WTC11 (cell line): ENCODE measurements at regions of chr5 and their contacts with region 1.

Region 1: GRCh38 chr5:140926443-140927227 is 536 bp downstream of the PCDHAC1 start:
- DNase-seq: peak; percentile 98
- ATAC-seq: peak; percentile 86
- H3K4me3 Mint-ChIP-seq: peak overlapping the region; percentile 91
- H3K27ac Mint-ChIP-seq: no peak overlapping the region
- H3K4me1 Mint-ChIP-seq: peaks cover 28% of the 10 kb centered on the region
- H3K27me3 Mint-ChIP-seq: peaks cover 37% of the 10 kb centered on the region
- CTCF ChIP-seq: peak; percentile 87; the same call in 1 of the 2 replicates

Region 2: GRCh38 chr5:140855772-140856674 is 70.6 kb before region 1 on chr5 and contains the start of gene PCDHA10:
- CTCF ChIA-PET with region 1: interaction called, 34 read pairs
- POLR2A ChIA-PET with region 1: no interaction called
- DNase-seq: peak; percentile 48
- ATAC-seq: peak; percentile 84
- H3K4me3 Mint-ChIP-seq: peak within 1 kb of the TSS; percentile 92
- H3K27ac Mint-ChIP-seq: peak within 1 kb of the TSS; percentile 78
- H3K4me1 Mint-ChIP-seq: peaks cover 23% of the 10 kb centered on the region
- H3K27me3 Mint-ChIP-seq: no peaks in the 10 kb centered on the region
- CTCF ChIP-seq: peak; percentile 36
- total RNA-seq, gene PCDHA10: 10.8 to 12.0 TPM (median 11.6 TPM) in 3 replicates

Region 3: DNA sequence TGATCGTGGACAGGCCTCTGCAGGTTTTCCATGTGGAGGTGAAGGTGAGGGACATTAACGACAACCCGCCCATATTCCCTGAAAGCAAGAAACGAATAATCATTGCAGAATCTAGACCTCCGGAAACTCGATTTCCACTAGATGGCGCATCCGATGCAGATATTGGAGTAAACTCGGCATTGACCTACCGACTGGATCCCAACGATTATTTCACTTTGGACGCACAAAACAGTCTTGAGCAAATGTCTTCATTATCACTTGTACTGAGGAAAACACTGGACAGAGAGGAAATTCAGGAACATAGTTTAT is 44.1 kb before region 1 on chr5:
- CTCF ChIA-PET with region 1: interaction called, 19 read pairs
- POLR2A ChIA-PET with region 1: no interaction called
- DNase-seq: peak; percentile 69
- ATAC-seq: peak; percentile 70
- H3K4me3 Mint-ChIP-seq: peak overlapping the region; percentile 83
- H3K27ac Mint-ChIP-seq: peak overlapping the region; percentile 58; the same call in 1 of the 2 replicates
- H3K4me1 Mint-ChIP-seq: peaks cover 16% of the 10 kb centered on the region; the same call in 1 of the 2 replicates
- H3K27me3 Mint-ChIP-seq: no peaks in the 10 kb centered on the region
- CTCF ChIP-seq: peak; percentile 21; the same call in 1 of the 2 replicates

Region 4: GRCh38 chr5:140966293-140967225 is 39.9 kb after region 1 on chr5 and contains the start of gene PCDHAC2:
- CTCF ChIA-PET with region 1: interaction called, 79 read pairs
- POLR2A ChIA-PET with region 1: interaction called, 20 read pairs
- DNase-seq: peak; percentile 78
- ATAC-seq: peak; percentile 77
- H3K4me3 Mint-ChIP-seq: peak within 1 kb of the TSS; percentile 92
- H3K27ac Mint-ChIP-seq: peak within 1 kb of the TSS; percentile 51; the same call in 1 of the 2 replicates
- H3K4me1 Mint-ChIP-seq: peaks cover 50% of the 10 kb centered on the region
- H3K27me3 Mint-ChIP-seq: peaks cover 21% of the 10 kb centered on the region
- CTCF ChIP-seq: no peak
- total RNA-seq, gene PCDHAC2: 6.7 to 11.3 TPM (median 7.9 TPM) in 3 replicates

Region 5: GRCh38 chr5:141017943-141018342 is 91.3 kb after region 1 on chr5:
- CTCF ChIA-PET with region 1: interaction called, 14 read pairs
- POLR2A ChIA-PET with region 1: no interaction called
- DNase-seq: no peak
- ATAC-seq: no peak
- H3K4me3 Mint-ChIP-seq: no peak overlapping the region
- H3K27ac Mint-ChIP-seq: no peak overlapping the region
- H3K4me1 Mint-ChIP-seq: no peaks in the 10 kb centered on the region
- H3K27me3 Mint-ChIP-seq: no peaks in the 10 kb centered on the region
- CTCF ChIP-seq: no peak

Region 6: GRCh38 chr5:141050622-141051525 is 124.2 kb after region 1 on chr5 and contains the start of gene PCDHB1:
- CTCF ChIA-PET with region 1: interaction called, 23 read pairs
- POLR2A ChIA-PET with region 1: no interaction called
- DNase-seq: peak; percentile 26
- ATAC-seq: peak; percentile 80
- H3K4me3 Mint-ChIP-seq: peak within 1 kb of the TSS; percentile 82
- H3K27ac Mint-ChIP-seq: peak within 1 kb of the TSS; percentile 73
- H3K4me1 Mint-ChIP-seq: peaks cover 13% of the 10 kb centered on the region
- H3K27me3 Mint-ChIP-seq: peaks cover 45% of the 10 kb centered on the region
- CTCF ChIP-seq: no peak
- total RNA-seq, gene PCDHB1: 0.09 to 0.13 TPM (median 0.11 TPM) in 3 replicates

Region 7: GRCh38 chr5:141465351-141465750 is 538.7 kb after region 1 on chr5:
- CTCF ChIA-PET with region 1: no interaction called
- POLR2A ChIA-PET with region 1: no interaction called
- DNase-seq: no peak
- ATAC-seq: no peak
- H3K4me3 Mint-ChIP-seq: no peak overlapping the region
- H3K27ac Mint-ChIP-seq: peak overlapping the region; percentile 17; the same call in 1 of the 2 replicates
- H3K4me1 Mint-ChIP-seq: no peaks in the 10 kb centered on the region
- H3K27me3 Mint-ChIP-seq: no peaks in the 10 kb centered on the region
- CTCF ChIP-seq: no peak